Dorsolateral prefrontal cortex (tissue), 120 donors: ENCODE measurements at regions of chr2 and their contacts with region 1.

Region 1: DNA sequence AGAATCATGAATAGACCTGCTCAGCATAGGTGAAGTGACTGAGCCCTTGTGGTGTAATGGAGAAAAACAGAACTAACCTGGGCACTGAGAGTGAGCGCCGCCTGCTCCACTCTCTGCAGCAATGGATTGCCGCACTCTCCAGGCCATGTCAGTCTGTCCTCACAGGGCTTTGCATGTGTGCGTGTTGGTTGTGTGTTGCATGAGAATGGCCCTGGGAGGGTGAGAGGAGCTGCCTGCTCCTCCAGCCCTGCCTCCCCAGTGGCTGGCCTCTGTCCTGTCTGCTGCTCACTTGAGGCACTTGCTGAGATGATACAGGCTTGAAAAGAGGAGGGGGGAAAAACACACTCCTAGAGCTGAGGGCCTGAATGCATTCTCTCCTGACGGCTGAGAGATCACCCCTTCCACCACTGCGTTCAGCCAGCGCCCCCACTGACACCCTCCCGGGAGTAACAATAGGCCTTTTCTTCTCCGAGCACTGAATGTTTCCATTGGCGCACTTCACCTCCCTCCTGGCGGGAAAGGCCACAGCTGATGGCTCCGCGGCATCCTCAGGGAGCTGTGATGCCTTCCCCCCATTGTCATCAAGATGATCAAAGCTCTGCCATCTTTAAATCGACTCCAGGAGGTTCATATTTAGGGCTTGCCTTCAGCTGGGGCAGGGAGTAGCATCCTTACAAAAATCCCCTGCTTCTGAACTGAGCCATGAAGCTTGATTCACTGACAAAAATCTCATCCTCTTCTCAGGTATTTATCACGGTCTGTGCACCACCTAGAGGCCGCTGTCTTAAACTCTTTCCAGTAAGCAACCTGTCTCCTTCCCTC is 49.9 kb upstream of the DAPL1 start:
- DNase-seq: peak; percentile 49 to 79 (median 70)
- H3K4me3 ChIP-seq: peak overlapping the region in 23 of 59 donors; percentile 1 to 35 (median 18)
- H3K27ac ChIP-seq: peak overlapping the region in 36 of 59 donors; percentile 6 to 76 (median 37)
- H3K27me3 ChIP-seq: peaks cover 0 to 6% (median 0%) of the 10 kb centered on the region in 45 donors
- CTCF ChIP-seq: peak in 54 of 56 donors; percentile 33 to 77 (median 58)

Region 2: DNA sequence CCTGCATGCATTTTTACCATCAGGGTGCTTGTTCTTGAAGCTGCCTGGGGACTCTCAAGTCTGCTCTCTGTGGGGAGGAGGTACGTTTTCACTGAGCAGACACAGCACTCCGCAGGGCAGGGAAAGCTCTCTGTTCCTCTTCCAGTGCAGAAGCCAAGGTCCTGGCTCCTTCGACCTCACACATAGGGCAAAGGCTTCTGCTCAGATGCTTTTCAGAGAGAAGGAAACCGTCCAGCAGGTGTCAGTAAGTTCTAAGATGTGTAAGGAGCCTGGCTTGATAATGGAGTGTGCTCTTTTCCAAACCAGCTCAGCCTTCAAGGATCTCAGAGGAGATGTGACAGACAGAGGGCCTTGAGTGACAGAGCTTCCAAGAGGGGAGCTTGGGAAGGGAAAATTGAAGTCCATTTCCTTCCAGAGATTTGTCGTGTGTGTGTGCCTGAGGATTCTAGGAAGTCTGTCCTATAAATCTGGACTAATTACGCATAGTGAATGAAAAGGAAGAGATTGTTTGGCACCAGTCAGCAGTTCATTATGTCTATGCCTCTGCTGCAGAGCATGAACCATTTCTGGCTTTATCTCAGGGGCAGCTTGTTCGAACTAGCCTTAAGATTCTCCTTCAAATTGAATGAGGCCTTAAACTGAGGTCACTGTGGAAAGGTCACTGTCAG is 710.9 kb before region 1 on chr2:
- intact Hi-C with region 1: loop called in 1 of 2 experiments (anchors 5 kb)
- DNase-seq: peak in 2 of 10 donors; percentile 14 to 24
- H3K4me3 ChIP-seq: no peak overlapping the region
- H3K27ac ChIP-seq: no peak overlapping the region
- H3K27me3 ChIP-seq: no peaks in the 10 kb centered on the region
- CTCF ChIP-seq: peak in 54 of 56 donors; percentile 25 to 70 (median 44)

Region 3: DNA sequence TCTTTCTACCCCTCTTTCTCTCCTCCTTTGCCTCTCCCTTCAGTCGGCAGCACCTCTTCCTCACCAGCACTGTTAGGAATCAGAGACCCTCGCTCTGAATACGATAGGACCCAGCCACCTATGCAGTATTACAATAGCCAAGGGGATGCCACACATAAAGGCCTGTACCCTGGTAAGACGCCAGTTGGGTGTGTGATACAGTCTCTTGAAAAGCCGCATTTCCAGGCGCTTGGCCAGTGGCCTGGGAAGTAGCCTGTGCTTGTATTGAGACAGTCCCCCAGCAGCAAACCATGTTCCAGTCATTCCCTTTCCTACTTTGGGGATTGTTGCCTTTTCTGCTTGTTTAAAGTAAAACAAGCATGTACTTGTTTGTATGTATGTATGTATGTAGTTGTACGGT is 68.6 kb before region 1 on chr2:
- intact Hi-C with region 1: loop called in 1 of 2 experiments (anchors 5 kb)
- DNase-seq: peak in 2 of 10 donors; percentile 45 to 75
- H3K4me3 ChIP-seq: no peak overlapping the region
- H3K27ac ChIP-seq: peak overlapping the region in 28 of 59 donors; percentile 8 to 65 (median 34)
- H3K27me3 ChIP-seq: no peaks in the 10 kb centered on the region
- CTCF ChIP-seq: no peak